ENCODE measurements at regions of chr12 and their contacts with region 1.

Region 1: DNA sequence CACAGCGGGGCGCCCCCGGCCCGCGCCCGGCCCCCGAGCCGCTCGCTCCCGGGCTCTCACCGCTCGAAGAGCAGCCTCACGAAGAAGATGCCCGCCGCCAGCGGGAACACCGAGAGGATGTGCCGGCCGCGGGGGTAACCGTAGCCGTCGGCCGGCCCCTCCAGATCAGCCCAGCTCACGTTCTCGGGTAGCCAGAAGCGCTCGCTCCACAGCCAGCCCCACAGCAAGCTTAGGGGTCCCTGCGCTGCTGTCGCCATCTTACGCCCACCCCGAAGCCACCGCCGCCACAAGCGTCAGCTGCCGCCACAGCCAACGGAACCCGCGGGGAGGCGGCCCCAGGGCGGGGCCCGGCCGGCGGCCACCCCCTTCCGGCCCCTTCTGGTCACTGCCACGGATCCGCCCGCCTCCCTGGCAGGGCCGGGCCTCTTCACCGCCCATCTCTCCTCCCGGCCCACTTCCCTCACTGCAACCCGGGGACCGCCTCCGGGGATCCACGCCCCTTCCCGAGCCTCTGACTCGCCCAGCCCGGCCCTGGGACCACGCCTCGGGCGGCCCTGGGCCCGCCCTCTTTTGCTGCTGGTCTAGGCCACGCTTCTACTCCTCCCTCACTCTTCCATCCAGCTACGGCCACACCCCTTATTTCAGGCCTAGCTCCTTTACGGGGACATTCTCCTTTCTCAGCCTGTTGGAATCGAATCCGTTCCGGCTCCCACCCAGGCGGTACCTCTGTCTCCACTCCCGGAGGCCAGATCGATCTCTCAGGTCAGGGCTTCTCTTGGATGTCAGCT is at the start of gene CERS5:
- H3K4me3 ChIP-seq: peak within 1 kb of the TSS; percentile 96
- H3K27ac ChIP-seq: peak within 1 kb of the TSS; percentile 84
- H3K4me1 ChIP-seq: peaks cover 3% of the 10 kb centered on the region; the same call in 1 of the 2 replicates
- CTCF ChIP-seq: peak; percentile 36

Region 2: GRCh38 chr12:50142993-50143392 is 24.2 kb before region 1 on chr12:
- CTCF ChIA-PET with region 1: interaction called, 3 read pairs
- POLR2A ChIA-PET with region 1: interaction called, 12 read pairs
- H3K4me3 ChIP-seq: no peak overlapping the region
- H3K27ac ChIP-seq: no peak overlapping the region
- H3K4me1 ChIP-seq: peaks cover 6% of the 10 kb centered on the region
- CTCF ChIP-seq: no peak

Measured in HEK293 (cell line).